Vagina (tissue), 2 donors: ENCODE measurements at regions of chr12 and their contacts with region 1.

Region 1: GRCh38 chr12:21989819-21990412 is 48.7 kb upstream of the ABCC9 start:
- DNase-seq: no peak
- H3K4me3 ChIP-seq: no peak overlapping the region
- H3K27ac ChIP-seq: no peak overlapping the region
- H3K4me1 ChIP-seq: no peaks in the 10 kb centered on the region
- H3K27me3 ChIP-seq: no peaks in the 10 kb centered on the region
- CTCF ChIP-seq: peak; percentile 17 to 67 (median 19)
- POLR2A ChIP-seq: no peak

Region 2: DNA sequence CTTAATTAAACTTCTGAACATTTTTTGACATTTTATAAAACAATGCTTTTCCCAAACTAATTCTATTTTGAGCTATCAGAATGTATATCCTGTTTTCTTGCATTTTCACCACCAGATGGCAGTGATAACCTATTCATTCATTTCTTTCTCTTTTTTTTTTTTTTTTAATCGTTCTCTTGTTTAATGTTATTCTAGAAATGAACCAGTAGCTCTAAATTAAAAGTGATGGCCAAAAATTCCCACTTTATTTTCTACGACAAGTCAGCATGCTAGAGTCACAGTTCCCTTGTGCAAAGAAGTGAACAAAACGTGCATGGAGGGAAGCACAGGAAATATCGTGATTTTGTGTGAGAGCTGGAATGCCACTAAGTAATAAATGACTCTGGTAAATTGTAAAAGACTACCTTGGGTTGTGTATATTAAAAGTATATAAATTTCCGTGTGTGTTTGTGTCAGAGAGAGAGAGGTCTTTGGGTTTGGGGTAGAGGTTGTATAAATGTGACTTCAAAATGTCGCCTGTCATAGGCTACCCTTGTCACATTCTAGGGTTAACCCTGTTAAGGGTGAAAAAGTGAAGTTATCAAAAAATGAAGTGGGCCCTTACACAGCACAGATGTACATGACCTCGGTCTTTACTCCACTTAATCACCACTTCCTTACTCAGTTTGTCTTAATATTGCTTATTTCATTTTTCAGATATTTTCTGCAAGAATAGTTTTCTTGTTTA is 291.8 kb before region 1 on chr12:
- intact Hi-C with region 1: loop called (anchors 5 kb)
- DNase-seq: no peak
- H3K4me3 ChIP-seq: no peak overlapping the region
- H3K27ac ChIP-seq: no peak overlapping the region
- H3K4me1 ChIP-seq: no peaks in the 10 kb centered on the region
- H3K27me3 ChIP-seq: no peaks in the 10 kb centered on the region
- CTCF ChIP-seq: peak; percentile 58 to 66 (median 62)
- POLR2A ChIP-seq: no peak

Region 3: DNA sequence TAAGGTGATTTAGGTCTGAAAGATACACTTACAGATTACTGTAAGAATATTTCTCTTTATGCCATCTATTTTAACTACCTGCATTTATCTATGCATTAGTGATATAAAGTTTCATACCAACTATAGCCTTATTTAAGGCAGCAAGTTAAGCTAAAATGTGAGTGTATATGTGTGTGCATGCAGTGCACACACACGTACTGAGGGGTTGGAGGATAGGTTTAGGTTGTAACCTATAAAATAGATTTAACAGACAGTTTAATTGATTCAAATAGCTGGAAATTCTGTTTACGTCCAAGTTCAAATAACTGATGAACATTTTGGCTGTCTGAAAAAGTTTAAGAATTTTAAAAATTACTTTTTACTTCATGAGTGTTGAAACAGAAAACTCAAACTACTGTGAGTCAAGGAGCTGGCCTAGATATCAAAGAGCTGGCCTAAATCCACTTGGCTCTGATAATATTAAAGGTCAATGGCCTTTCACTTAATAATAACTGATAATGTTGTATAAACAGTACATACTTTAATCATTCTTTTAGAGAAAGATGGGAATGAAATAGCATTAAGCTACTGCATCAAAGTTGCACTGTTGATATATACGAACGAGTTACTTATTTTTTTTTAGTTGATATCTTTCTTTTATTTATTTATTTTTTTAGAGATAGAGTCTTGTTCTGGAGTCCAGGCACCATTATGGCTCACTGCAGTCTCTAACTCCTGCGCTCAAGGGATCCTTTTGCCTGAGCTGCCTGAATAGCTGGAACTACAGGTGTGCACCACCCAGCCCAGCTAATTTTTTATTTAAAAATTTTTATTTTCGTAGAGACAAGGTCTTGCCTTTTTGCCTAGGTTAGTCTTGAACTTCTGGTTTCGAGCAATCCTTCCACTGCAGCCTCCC is 201.6 kb before region 1 on chr12:
- intact Hi-C with region 1: no loop called
- DNase-seq: no peak
- H3K4me3 ChIP-seq: no peak overlapping the region
- H3K27ac ChIP-seq: no peak overlapping the region
- H3K4me1 ChIP-seq: no peaks in the 10 kb centered on the region
- H3K27me3 ChIP-seq: no peaks in the 10 kb centered on the region
- CTCF ChIP-seq: no peak
- POLR2A ChIP-seq: no peak

Region 4: GRCh38 chr12:22110176-22110575 is 120.3 kb after region 1 on chr12:
- intact Hi-C with region 1: no loop called
- DNase-seq: no peak
- H3K4me3 ChIP-seq: no peak overlapping the region
- H3K27ac ChIP-seq: no peak overlapping the region
- H3K4me1 ChIP-seq: no peaks in the 10 kb centered on the region
- H3K27me3 ChIP-seq: no peaks in the 10 kb centered on the region
- CTCF ChIP-seq: no peak
- POLR2A ChIP-seq: no peak